ENCODE measurements at regions of chr7 and their contacts with region 1.

Region 1: GRCh38 chr7:143380255-143380645 is 895 bp upstream of the ZYX start:
- DNase-seq: peak; percentile 65 to 93 (median 83)
- ATAC-seq: peak; percentile 53 to 64 (median 54)
- H3K4me3 ChIP-seq: peak overlapping the region; percentile 82 to 100
- H3K4me3 Mint-ChIP-seq: peak overlapping the region in 2 of 3 donors; percentile 89 to 92
- H3K27ac ChIP-seq: peak overlapping the region; percentile 97
- H3K27ac Mint-ChIP-seq: peak overlapping the region; percentile 96 to 97
- H3K4me1 ChIP-seq: peaks cover 17 to 84% of the 10 kb centered on the region in 2 experiments
- H3K4me1 Mint-ChIP-seq: peaks cover 44 to 45% (median 44%) of the 10 kb centered on the region in 3 donors
- H3K27me3 ChIP-seq: no peaks in the 10 kb centered on the region
- H3K27me3 Mint-ChIP-seq: no peaks in the 10 kb centered on the region

Region 2: DNA sequence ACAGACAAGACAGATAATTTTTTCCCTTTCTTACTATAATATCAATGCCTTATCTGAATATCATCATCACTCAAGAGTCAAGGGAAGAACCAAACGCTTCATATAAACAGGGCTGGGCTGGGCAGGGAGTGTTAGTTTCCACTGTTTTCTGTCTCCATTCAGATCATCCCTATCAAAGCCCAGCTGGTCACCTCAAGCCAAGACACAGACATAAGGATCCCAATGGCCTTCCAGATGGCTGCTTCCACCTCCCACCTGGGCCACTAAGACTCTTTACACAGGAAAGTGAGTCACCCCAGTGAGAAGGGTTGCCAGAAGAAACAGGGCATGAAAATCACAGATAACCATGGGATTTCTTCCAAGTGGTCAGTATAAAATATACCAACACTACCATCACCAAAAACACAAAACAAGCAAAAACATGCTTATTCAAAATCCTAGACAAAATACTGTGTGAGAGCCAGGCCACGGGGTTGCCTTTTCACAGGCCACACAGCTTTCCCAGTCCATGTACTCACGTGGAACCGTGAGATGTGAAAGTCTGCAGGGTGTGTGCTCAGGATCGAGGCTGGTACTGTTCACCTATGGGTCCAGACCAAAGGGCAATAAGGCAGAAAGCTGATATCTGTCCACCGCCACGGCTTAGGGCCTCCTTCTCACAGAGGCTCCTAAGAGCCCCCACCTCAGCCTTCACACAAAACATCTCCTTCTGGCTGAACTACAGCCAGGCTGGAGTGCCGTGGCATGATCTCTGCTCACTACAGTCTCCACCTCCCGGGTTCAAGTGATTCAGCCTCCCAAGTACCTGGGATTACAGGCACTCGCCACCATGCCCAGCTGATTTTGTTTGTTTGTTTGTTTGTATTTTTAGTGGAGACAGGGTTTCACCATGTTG is 625.3 kb before region 1 on chr7:
- CTCF ChIA-PET with region 1: no interaction called
- POLR2A ChIA-PET with region 1: no interaction called
- DNase-seq: no peak
- ATAC-seq: no peak
- H3K4me3 ChIP-seq: no peak overlapping the region
- H3K4me3 Mint-ChIP-seq: no peak overlapping the region
- H3K27ac ChIP-seq: no peak overlapping the region
- H3K27ac Mint-ChIP-seq: no peak overlapping the region
- H3K4me1 ChIP-seq: no peaks in the 10 kb centered on the region
- H3K4me1 Mint-ChIP-seq: no peaks in the 10 kb centered on the region
- H3K27me3 ChIP-seq: no peaks in the 10 kb centered on the region
- H3K27me3 Mint-ChIP-seq: peaks cover 0 to 1% of the 10 kb centered on the region in 2 donors

Region 3: GRCh38 chr7:143407291-143408251 is 27.3 kb after region 1 on chr7:
- CTCF ChIA-PET with region 1: interaction called, 5 to 19 read pairs
- POLR2A ChIA-PET with region 1: interaction called, 4 read pairs
- DNase-seq: peak in 31 of 35 experiments; percentile 31 to 77 (median 44)
- ATAC-seq: peak; percentile 73 to 80 (median 76)
- H3K4me3 ChIP-seq: peak overlapping the region; percentile 66 to 89
- H3K4me3 Mint-ChIP-seq: peak overlapping the region; percentile 89 to 91 (median 91)
- H3K27ac ChIP-seq: no peak overlapping the region
- H3K27ac Mint-ChIP-seq: peak overlapping the region; percentile 90 to 95
- H3K4me1 ChIP-seq: peaks cover 37 to 48% of the 10 kb centered on the region in 2 experiments
- H3K4me1 Mint-ChIP-seq: peaks cover 74 to 82% (median 79%) of the 10 kb centered on the region in 3 donors
- H3K27me3 ChIP-seq: peaks cover 0 to 3% of the 10 kb centered on the region in 2 experiments
- H3K27me3 Mint-ChIP-seq: no peaks in the 10 kb centered on the region

Region 4: DNA sequence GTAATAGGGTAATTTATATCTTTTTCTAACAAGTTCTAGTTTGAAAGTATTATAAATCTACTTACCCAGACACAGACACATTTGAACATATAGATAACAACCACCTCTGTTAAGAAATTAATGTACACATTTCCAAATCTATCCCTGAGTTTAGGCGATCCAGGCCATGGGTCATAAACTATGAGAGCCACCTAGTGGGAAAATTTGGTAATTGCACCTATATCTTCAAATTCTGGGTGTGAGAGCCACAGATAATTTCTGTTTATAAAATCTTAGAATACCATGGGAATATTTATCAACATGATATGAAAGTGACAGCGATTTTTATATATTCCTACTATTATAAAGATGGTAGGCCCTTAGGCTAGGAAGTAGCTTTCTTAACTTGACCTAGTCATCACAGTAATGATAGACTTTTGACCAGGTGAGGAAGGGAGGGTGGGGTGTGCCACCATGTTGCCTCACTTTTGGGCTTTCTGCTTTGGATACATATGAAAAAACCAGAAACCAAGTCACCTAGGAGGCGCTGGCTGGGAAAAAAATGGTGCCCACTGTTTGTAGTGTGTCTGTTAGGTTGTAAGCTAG is 36.4 kb after region 1 on chr7:
- CTCF ChIA-PET with region 1: interaction called, 8 to 18 read pairs
- POLR2A ChIA-PET with region 1: no interaction called
- DNase-seq: peak in 2 of 35 experiments; percentile 19 to 75
- ATAC-seq: peak in 2 of 4 experiments; percentile 44 to 52
- H3K4me3 ChIP-seq: no peak overlapping the region
- H3K4me3 Mint-ChIP-seq: no peak overlapping the region
- H3K27ac ChIP-seq: no peak overlapping the region
- H3K27ac Mint-ChIP-seq: no peak overlapping the region
- H3K4me1 ChIP-seq: peaks cover 0 to 5% of the 10 kb centered on the region in 2 experiments
- H3K4me1 Mint-ChIP-seq: peaks cover 19 to 55% (median 21%) of the 10 kb centered on the region in 3 donors
- H3K27me3 ChIP-seq: no peaks in the 10 kb centered on the region
- H3K27me3 Mint-ChIP-seq: peaks cover 0 to 2% of the 10 kb centered on the region in 2 donors

Measured in T-cell (primary cell).